Right ventricle myocardium inferior (tissue), 1 donor: ENCODE measurements at regions of chr19 and their contacts with region 1.

Region 1: GRCh38 chr19:44051654-44052402 is at the start of gene ZNF223:
- DNase-seq: peak; percentile 95
- ATAC-seq: peak; percentile 100
- total RNA-seq, gene ZNF223: 2.4 TPM

Region 2: DNA sequence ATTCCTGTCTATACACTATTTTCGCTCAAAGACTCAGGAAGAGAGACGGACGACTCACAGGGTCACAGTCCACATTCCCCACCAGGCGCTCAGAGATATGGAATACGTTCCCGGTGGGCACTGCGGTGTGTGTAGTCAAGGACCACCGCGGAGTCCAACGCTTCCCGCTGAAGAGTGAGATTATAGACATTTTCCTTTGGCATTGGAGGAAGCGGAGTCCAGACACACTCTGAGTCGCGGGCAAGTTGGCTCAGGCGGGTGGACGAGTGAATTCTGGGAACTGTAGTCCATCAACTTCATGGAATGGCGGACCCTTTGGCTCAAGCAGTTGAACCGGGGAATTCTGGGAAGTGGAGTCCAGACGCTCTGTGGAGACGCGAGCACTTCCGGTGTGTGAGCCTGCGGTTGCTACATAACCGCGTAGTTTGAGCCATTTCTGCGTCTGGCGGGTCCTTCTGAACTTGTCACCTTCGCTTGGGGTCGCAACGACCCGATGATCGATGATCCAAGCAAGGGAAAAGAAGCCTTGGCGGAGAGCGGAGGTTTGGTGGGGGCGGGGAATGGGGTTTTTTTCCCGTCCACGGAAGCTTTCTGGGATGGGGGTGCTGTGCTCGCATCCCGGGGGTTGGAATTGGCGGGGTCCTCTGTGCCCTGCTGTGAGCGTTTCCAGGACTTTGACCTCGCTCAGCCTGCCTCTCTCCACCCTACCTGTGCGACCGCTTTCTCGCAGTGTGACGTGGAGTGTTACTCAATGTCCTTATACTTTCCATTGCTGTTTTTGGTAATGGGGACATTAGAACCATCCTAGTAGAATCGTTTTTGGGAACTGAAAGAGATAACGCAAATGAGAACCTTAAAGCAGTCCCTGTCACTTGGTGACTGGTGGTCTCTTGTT is 49.0 kb before region 1 on chr19 and contains the start of gene ZNF230:
- intact Hi-C with region 1: loop called (anchors 10 kb)
- DNase-seq: peak; percentile 91
- ATAC-seq: peak; percentile 99
- total RNA-seq, gene ZNF230: 2.1 TPM

Region 3: GRCh38 chr19:44025217-44025936 is 26.5 kb before region 1 on chr19 and contains the start of gene ZNF222:
- intact Hi-C with region 1: loop called (anchors 1 kb)
- DNase-seq: peak; percentile 92
- ATAC-seq: peak; percentile 98
- total RNA-seq, gene ZNF222: 2.6 TPM

Region 4: DNA sequence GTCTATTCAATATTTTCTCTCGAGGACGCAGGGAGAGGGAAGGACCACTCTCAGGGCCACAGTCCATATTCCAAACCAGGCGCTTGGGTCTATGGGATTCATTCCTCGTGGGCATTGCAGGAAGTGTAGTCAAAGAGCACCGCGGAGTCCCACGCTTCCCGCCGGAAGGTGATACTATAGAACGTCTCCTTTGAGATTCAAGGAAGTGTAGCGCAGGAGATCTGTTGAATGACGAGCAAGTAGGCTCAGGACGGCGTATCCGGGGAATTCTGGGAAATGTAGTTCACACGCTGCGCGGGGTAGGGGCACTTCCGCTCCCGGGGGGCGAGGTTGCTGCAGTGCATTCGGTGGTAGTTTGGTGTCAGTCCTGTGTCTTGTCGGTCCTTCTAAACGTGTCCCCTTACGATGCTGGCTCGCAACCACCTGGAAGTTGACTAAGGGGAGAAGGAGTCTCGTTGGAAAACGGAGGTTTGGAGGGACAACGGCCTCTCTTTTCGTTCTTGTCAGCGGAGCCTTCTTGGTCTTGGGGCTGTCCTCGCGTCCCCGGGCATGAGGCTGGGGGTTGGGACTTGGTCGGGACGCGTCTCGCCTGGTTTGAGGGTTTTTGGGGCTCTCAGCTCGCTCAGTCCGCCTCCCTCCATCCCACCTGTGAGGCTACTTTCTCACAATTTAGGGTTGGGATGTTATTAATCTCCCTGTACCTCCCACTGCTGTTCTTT is 20.2 kb after region 1 on chr19 and contains the start of gene ZNF284:
- intact Hi-C with region 1: loop called (anchors 2 kb)
- DNase-seq: peak; percentile 84
- ATAC-seq: peak; percentile 99
- total RNA-seq, gene ZNF284: 1.7 TPM

Region 5: GRCh38 chr19:44141191-44142058 is 89.6 kb after region 1 on chr19 and contains the start of gene ZNF234:
- intact Hi-C with region 1: no loop called
- DNase-seq: peak; percentile 87
- ATAC-seq: peak; percentile 97
- total RNA-seq, gene ZNF234: 9.4 TPM

Region 6: DNA sequence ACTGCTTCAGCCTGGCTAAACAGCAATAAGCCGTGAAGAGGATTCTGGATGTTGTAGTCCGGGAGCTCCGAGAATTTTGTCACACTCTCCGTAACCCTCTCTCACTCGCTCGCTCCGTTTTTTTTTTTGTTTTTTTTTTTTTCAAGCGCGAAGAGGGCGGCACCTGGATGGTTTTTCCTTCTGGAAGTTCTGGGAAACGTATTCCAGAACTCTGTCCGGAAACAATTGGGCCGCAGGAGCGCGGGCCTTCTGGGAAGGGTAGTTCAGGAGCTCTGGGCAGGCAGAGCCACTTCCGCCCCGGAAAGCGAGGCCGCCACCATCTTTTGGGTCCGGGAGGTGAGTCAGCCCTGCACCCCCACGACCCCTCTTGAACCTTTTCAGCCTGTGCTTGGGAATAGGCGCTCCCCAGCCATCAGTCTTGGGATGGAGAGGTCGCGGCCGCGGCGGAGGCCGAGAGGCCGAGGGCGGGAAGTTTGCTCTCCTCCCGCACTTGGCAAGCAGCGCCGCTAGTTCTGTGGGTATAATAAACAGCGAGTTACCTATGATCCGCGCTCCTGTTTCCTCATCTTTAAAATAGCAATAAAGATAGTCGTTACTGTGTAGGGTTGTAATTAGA is 160.5 kb after region 1 on chr19 and contains the start of gene ZNF227:
- intact Hi-C with region 1: loop called (anchors 2 kb)
- DNase-seq: peak; percentile 95
- ATAC-seq: peak; percentile 98
- total RNA-seq, gene ZNF227: 13.1 TPM

Region 7: DNA sequence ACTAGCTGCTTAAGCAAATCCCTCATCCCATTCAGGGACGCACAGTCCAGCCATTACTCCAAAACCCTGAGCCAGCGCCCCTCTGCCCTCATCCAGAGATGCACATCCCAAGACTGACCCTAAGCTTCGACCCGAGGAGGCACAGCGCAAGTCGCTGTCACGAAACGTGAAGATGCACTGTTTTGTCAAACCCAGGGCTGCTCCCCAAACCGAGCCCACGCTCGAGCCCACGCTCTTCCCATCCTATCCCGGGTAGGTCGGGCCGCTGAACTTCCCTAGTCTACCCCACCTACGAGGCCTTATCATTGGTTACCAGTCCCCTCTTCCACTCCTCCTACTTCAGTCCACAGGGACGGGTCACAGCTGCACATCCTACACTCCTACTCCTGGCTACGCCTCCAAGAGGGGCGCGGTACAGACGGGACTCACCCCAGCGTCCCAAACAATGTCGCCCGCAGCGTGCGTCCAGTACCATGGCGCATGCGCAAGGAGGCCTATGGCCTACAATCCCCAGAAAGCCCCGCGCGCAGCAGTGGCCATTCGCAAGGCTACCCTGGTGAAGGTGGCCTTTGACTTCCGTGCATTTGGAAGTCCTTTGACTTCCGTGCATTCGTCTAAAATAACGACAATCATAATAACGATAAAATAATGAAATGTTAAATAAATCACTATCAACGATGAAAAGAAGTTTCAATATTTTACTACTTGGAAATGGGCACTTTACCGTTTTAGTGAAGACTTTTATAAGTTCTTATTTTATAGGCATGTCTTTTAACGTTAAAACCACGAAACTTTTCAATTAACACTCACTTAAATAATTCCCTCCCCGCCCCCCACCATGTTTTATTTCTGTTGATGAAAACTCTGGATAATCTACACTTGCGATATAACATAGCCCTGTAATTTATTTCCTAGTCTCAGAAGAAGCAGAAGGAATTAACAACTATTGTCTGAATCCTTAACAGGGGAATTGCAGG is 349.6 kb after region 1 on chr19 and contains the start of gene ZNF285:
- intact Hi-C with region 1: loop called (anchors 5 kb)
- DNase-seq: peak; percentile 97
- ATAC-seq: peak; percentile 100
- total RNA-seq, gene ZNF285: 4.9 TPM